ENCODE measurements at regions of chr22 and their contacts with region 1.

Region 1: GRCh38 chr22:20916983-20917810 is at the start of gene CRKL:
- DNase-seq: peak; percentile 97
- H3K4me3 Mint-ChIP-seq: peak within 1 kb of the TSS; percentile 68
- H3K27ac Mint-ChIP-seq: peak within 1 kb of the TSS; percentile 39
- H3K4me1 Mint-ChIP-seq: peaks cover 24% of the 10 kb centered on the region
- H3K27me3 Mint-ChIP-seq: no peaks in the 10 kb centered on the region
- CTCF ChIP-seq: peak; percentile 81
- total RNA-seq, gene CRKL: 74.0 and 76.1 TPM in 2 replicates

Region 2: GRCh38 chr22:20833225-20833665 is 84.0 kb before region 1 on chr22:
- CTCF ChIA-PET with region 1: no interaction called
- POLR2A ChIA-PET with region 1: no interaction called
- intact Hi-C with region 1: no loop called
- DNase-seq: no peak
- H3K4me3 Mint-ChIP-seq: no peak overlapping the region
- H3K27ac Mint-ChIP-seq: no peak overlapping the region
- H3K4me1 Mint-ChIP-seq: no peaks in the 10 kb centered on the region
- H3K27me3 Mint-ChIP-seq: no peaks in the 10 kb centered on the region
- CTCF ChIP-seq: no peak

Region 3: DNA sequence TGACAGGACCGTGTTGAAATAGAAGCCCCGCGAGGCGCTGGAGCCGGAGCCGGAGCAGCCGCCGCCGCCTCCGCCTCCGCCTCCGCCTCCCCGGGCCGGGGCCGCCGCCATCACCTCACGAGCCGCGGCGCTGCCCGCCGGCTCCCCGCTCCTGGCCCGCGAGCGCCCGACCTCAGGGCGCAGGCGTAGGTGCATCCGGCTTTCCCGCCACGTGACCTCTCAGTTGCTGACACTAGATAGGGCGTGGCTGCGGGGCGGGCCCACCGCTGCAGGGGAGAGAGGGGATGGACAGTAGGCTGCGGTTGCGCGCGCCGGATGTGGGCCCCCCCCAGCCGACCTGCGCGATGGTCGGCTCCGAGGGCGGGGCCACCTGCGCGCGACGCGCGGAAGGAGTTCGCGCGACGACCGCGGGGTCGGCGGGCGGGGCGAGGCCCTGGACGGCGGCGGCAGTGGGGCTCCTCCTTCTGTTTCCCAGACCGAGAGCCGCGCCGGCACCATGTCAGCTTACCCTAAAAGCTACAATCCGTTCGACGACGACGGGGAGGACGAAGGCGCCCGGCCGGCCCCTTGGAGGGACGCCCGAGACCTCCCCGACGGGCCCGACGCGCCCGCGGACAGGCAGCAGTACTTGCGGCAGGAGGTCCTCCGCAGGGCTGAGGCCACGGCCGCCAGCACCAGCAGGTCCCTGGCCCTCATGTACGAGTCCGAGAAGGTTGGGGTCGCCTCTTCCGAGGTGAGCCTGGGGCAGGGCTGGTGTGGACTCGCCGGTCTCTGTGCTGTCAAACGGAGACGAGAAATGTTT is 58.4 kb before region 1 on chr22 and contains the starts of genes PI4KA and SNAP29:
- CTCF ChIA-PET with region 1: no interaction called
- POLR2A ChIA-PET with region 1: interaction called, 10 read pairs
- intact Hi-C with region 1: no loop called
- DNase-seq: peak; percentile 98
- H3K4me3 Mint-ChIP-seq: peak within 1 kb of the TSS; percentile 87
- H3K27ac Mint-ChIP-seq: peak within 1 kb of the TSS; percentile 88
- H3K4me1 Mint-ChIP-seq: peaks cover 27% of the 10 kb centered on the region
- H3K27me3 Mint-ChIP-seq: no peaks in the 10 kb centered on the region
- CTCF ChIP-seq: no peak
- total RNA-seq, gene PI4KA: 39.0 and 41.3 TPM in 2 replicates
- total RNA-seq, gene SNAP29: 28.7 and 39.0 TPM in 2 replicates

Region 4: DNA sequence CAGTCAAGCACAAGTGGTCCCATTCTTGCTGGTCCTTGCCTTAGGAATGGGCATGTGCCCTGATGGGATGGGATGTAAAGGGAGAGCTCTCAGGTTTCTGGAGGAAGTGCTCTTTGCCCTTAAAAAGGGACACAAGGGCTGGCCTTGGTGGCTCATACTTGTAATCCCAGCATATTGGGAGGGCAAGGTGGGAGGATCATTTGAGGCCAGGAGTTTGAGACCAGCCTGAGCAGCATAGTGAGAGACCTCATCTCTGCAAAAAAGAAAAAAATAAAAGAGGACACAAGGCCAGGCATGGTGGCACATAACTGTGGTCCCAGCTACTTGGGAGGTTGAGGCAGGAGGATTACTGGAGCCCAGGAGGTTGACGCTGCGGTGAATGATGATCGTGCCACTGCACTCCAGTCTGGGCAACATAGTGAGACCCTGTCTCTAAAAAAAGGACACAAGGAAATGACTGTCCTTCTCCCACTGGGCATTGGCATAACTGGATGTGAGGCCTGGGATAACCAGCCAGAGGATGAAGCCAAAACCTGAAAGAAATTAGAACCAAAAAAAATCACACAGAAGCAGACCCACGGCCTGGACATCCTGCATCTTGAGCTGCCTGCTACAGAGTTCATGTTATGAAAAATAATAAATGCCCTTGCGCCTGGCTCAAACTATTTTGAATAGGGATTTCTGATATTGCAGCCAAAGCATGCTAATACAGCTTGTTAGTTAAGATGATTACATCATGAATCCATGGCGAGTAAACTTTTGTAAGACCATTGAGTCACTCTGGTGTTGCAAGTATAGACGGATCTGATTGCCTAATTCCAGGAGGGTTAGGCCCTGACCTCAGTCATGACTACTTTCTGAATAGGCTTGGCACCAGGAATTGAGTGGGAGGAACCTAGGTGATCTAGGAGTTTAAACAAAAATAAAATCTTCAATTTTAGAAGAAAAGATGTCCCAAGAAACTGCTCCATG is 12.9 kb before region 1 on chr22:
- CTCF ChIA-PET with region 1: interaction called, 5 read pairs
- POLR2A ChIA-PET with region 1: interaction called, 58 read pairs
- intact Hi-C with region 1: loop called (anchors 1 kb)
- DNase-seq: peak; percentile 98
- H3K4me3 Mint-ChIP-seq: peak overlapping the region; percentile 52
- H3K27ac Mint-ChIP-seq: peak overlapping the region; percentile 95
- H3K4me1 Mint-ChIP-seq: peaks cover 15% of the 10 kb centered on the region
- H3K27me3 Mint-ChIP-seq: no peaks in the 10 kb centered on the region
- CTCF ChIP-seq: no peak

Region 5: DNA sequence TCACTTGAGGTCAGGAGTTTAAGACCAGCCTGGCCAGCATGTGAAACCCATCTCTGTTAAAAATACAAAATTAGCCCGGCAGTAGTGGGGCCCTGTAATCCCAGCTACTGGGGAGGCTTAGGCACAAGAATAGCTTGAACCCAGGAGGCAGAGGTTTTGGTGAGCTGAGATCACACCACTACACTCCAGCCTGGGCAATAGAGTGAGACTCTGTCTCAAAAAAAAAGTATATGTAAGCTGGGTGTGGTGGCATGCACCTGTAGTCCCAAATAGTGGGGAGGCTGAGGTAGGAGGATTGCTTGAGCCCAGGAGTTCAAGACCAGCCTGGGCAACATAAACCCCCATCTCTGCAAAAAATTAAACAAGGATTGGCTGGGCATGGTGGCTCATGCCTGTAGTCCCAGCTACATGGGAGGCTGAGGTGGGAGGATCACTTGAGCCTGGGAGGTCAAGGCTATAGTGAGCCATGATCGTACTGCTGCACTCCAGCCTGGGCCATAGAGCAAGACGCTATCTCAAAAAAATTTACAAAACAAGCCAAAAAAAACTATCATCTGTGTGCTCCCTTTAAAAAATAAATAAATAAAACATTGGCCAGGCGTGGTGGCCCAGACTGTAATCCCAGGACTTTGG is 10.9 kb after region 1 on chr22:
- CTCF ChIA-PET with region 1: interaction called, 13 read pairs
- POLR2A ChIA-PET with region 1: interaction called, 4 read pairs
- intact Hi-C with region 1: no loop called
- DNase-seq: no peak
- H3K4me3 Mint-ChIP-seq: no peak overlapping the region
- H3K27ac Mint-ChIP-seq: no peak overlapping the region
- H3K4me1 Mint-ChIP-seq: peaks cover 19% of the 10 kb centered on the region
- H3K27me3 Mint-ChIP-seq: no peaks in the 10 kb centered on the region
- CTCF ChIP-seq: no peak

Region 6: GRCh38 chr22:20937031-20937793 is 20.0 kb after region 1 on chr22:
- CTCF ChIA-PET with region 1: interaction called, 3 read pairs
- POLR2A ChIA-PET with region 1: interaction called, 11 read pairs
- intact Hi-C with region 1: no loop called
- DNase-seq: no peak
- H3K4me3 Mint-ChIP-seq: no peak overlapping the region
- H3K27ac Mint-ChIP-seq: peak overlapping the region; percentile 8
- H3K4me1 Mint-ChIP-seq: peaks cover 38% of the 10 kb centered on the region
- H3K27me3 Mint-ChIP-seq: no peaks in the 10 kb centered on the region
- CTCF ChIP-seq: no peak

Region 7: GRCh38 chr22:20956258-20957065 is 39.3 kb after region 1 on chr22:
- CTCF ChIA-PET with region 1: interaction called, 3 read pairs
- POLR2A ChIA-PET with region 1: interaction called, 23 read pairs
- intact Hi-C with region 1: loop called (anchors 5 kb)
- DNase-seq: peak; percentile 77
- H3K4me3 Mint-ChIP-seq: peak overlapping the region; percentile 71
- H3K27ac Mint-ChIP-seq: no peak overlapping the region
- H3K4me1 Mint-ChIP-seq: peaks cover 15% of the 10 kb centered on the region
- H3K27me3 Mint-ChIP-seq: no peaks in the 10 kb centered on the region
- CTCF ChIP-seq: no peak

Region 8: DNA sequence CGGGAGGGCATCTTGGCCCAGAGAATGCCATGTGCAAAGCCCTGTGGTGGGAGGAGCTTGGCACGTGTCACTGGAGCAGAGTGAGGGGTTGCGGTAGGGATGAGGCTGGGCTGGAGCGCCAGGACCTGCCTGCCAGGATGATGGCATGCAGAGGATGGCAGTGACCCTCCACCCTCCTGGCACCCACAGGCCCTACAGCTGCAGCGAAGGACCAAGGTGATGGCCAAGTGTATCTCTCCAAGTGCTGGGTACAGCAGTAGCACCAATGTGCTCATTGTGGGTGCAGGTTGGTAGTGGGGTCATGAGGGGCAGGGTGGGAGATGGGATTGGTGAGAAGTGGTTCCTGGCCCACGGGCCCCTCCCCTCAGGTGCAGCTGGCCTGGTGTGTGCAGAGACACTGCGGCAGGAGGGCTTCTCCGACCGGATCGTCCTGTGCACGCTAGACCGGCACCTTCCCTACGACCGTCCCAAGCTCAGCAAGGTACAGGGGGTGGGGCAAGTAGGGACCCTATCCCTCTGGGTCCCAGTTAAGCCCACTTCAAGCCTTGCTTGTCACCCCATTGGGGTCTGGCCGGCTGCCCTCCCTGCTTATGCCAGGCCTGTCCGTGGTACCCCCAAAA is 57.2 kb after region 1 on chr22:
- CTCF ChIA-PET with region 1: no interaction called
- POLR2A ChIA-PET with region 1: no interaction called
- intact Hi-C with region 1: no loop called
- DNase-seq: no peak
- H3K4me3 Mint-ChIP-seq: no peak overlapping the region
- H3K27ac Mint-ChIP-seq: no peak overlapping the region
- H3K4me1 Mint-ChIP-seq: no peaks in the 10 kb centered on the region
- H3K27me3 Mint-ChIP-seq: no peaks in the 10 kb centered on the region
- CTCF ChIP-seq: no peak